HEK293 (cell line): ENCODE measurements at regions of chr9 and their contacts with region 1.

Region 1: GRCh38 chr9:81833563-81834345 is 94.5 kb upstream of the SPATA31D4 start:
- H3K4me3 ChIP-seq: no peak overlapping the region
- H3K27ac ChIP-seq: no peak overlapping the region
- H3K4me1 ChIP-seq: no peaks in the 10 kb centered on the region
- CTCF ChIP-seq: no peak

Region 2: DNA sequence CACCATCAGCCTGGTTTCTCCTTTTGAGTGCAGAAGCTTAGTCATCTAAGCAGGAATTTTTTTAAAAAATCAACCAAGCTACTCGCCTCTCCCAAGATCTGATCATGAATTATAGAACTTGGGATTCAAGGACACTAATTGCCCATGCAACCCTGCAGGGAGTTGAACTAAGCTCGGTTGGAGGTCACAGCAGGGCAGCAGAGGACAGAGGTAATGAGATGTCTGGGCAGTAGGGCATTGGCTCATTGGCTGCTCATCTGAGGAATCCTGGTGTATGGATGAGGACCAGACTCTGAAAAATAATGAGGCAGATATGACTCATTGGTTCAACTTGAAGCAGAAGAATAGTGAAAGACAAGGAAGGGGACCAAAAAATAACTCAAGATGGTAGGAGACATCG is 32.6 kb before region 1 on chr9:
- CTCF ChIA-PET with region 1: no interaction called
- POLR2A ChIA-PET with region 1: no interaction called
- H3K4me3 ChIP-seq: no peak overlapping the region
- H3K27ac ChIP-seq: no peak overlapping the region
- H3K4me1 ChIP-seq: no peaks in the 10 kb centered on the region
- CTCF ChIP-seq: no peak

Region 3: DNA sequence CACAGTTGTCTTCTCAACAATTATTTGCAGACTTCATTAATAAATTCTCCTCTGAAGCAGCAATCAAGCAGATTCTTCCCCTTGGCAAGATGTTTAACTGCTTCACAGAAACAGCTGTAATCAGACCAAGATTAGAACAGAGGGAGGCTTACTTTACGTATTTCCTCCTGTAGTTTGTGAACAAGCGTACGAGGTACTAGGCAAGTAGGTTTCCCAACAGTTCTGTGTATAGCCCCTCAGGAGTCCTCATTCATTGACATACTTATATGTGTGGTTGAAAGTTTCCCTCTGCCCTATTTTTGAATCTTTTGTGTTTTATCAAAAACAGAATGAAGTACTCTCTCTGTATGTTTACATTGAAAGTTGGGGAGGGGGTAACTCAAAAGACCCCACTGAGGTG is 282.8 kb after region 1 on chr9:
- CTCF ChIA-PET with region 1: no interaction called
- POLR2A ChIA-PET with region 1: interaction called, 10 read pairs
- H3K4me3 ChIP-seq: no peak overlapping the region
- H3K27ac ChIP-seq: no peak overlapping the region
- H3K4me1 ChIP-seq: no peaks in the 10 kb centered on the region
- CTCF ChIP-seq: no peak